Motor neuron (in vitro differentiated cells): ENCODE measurements at regions of chr5 and their contacts with region 1.

Region 1: GRCh38 chr5:4879693-4880303 is 260.3 kb upstream of the ADAMTS16 start:
- ATAC-seq: peak; percentile 63 to 94 (median 84)
- H3K4me3 ChIP-seq: no peak overlapping the region
- H3K27ac ChIP-seq: no peak overlapping the region
- H3K4me1 ChIP-seq: peaks cover 0 to 10% of the 10 kb centered on the region in 2 donors

Region 2: GRCh38 chr5:5270958-5271605 is 391.3 kb after region 1 on chr5:
- in situ Hi-C with region 1: no loop called
- ATAC-seq: peak; percentile 84 to 100 (median 98)
- H3K4me3 ChIP-seq: peak overlapping the region in 4 of 5 donors; percentile 1 to 15 (median 6)
- H3K27ac ChIP-seq: peak overlapping the region; percentile 25 to 54
- H3K4me1 ChIP-seq: peaks cover 6 to 23% of the 10 kb centered on the region in 2 donors

Region 3: GRCh38 chr5:5421961-5422818 is 542.4 kb after region 1 on chr5 and contains the start of gene ICE1:
- in situ Hi-C with region 1: loop called (anchors 10 to 25 kb)
- ATAC-seq: peak; percentile 91 to 96 (median 95)
- H3K4me3 ChIP-seq: peak within 1 kb of the TSS; percentile 71 to 93 (median 92)
- H3K27ac ChIP-seq: peak within 1 kb of the TSS; percentile 99 to 100
- H3K4me1 ChIP-seq: peaks cover 17 to 22% of the 10 kb centered on the region in 2 donors
- total RNA-seq, gene ICE1: 17.8 to 39.2 (median 26.0) TPM